H1 (cell line): ENCODE measurements at regions of chr11 and their contacts with region 1.

Region 1: GRCh38 chr11:76293189-76293631 is 86.9 kb upstream of the WNT11 start:
- DNase-seq: no peak
- H3K4me3 ChIP-seq: no peak overlapping the region
- H3K27ac ChIP-seq: no peak overlapping the region
- H3K4me1 ChIP-seq: no peaks in the 10 kb centered on the region
- H3K27me3 ChIP-seq: no peaks in the 10 kb centered on the region; a peak in 1 of 7 replicates
- CTCF ChIP-seq: no peak
- EP300 ChIP-seq: no peak
- POLR2A ChIP-seq: no peak
- RAD21 ChIP-seq: no peak

Region 2: DNA sequence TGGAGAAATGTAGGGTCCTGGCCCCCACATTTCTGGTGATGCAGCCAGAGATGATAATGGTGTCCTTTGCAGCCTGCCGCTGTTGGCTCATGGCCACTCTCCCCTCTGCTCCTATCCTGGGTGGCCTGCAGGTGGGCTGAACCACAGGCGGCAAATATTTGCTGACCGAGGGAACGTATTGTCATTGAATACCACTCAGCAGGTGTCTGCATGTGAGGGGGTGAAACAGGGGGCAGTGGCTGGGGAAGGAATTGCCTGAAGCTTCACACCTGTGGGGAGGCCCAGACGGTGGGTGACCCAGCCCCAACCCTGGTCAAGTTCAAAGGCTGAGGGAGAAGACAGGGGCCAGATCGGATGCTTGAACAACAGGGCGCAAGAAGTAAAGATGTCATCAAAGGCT is 13.6 kb before region 1 on chr11:
- CTCF ChIA-PET with region 1: interaction called, 10 read pairs
- POLR2A ChIA-PET with region 1: no interaction called
- DNase-seq: peak in 1 of 2 experiments; percentile 19
- H3K4me3 ChIP-seq: no peak overlapping the region
- H3K27ac ChIP-seq: no peak overlapping the region
- H3K4me1 ChIP-seq: peaks cover 5 to 33% (median 13%) of the 10 kb centered on the region in 4 experiments
- H3K27me3 ChIP-seq: peaks cover 0 to 7% (median 2%) of the 10 kb centered on the region in 4 experiments; a peak in 2 of 7 replicates
- CTCF ChIP-seq: no peak
- EP300 ChIP-seq: peak; percentile 17 to 27; a peak in 2 of 3 replicates
- POLR2A ChIP-seq: no peak
- RAD21 ChIP-seq: no peak

Region 3: DNA sequence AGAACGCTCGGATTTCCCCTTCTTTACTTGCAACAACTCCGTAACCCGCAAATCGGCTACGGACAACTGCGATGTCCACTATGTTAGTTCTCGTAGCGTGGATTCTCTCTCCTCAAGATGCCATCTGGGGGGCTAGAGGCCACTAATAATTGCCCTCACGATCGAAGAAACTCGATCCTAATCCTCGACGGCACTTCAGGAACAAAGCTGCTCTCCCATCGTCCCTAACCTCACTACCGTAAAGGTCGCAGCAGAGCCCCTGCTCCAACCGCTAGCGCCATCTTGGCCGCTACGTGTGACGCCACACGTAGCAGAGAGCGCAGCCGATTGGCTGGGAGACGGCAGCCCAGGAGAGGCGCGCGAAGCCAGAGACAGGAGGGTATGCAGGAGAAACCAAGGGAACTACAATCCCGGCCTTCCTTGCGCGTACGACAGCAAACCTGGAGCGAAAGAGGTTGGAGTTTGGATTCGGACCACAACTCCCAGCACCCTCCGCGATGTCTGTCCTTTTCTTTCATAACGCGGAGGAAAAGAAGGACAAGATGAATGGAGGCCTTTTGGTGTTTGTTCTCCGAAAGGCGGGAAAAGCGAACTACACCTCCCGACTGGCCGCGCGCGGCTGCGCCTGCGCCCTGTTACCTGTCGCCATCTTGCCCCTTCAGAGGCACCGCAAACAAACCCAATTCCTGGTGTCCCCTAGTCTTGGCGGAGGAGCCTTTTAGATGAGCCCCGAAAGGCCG is 151.3 kb after region 1 on chr11 and contains the start of gene EMSY:
- CTCF ChIA-PET with region 1: no interaction called
- POLR2A ChIA-PET with region 1: no interaction called
- DNase-seq: peak; percentile 89 to 98
- H3K4me3 ChIP-seq: peak within 1 kb of the TSS; percentile 77 to 99 (median 96)
- H3K27ac ChIP-seq: peak within 1 kb of the TSS; percentile 98
- H3K4me1 ChIP-seq: peaks cover 0 to 20% (median 1%) of the 10 kb centered on the region in 4 experiments; a peak in 5 of 7 replicates
- H3K27me3 ChIP-seq: no peaks in the 10 kb centered on the region
- CTCF ChIP-seq: no peak
- EP300 ChIP-seq: no peak
- POLR2A ChIP-seq: peak; percentile 98
- RAD21 ChIP-seq: no peak
- total RNA-seq, gene EMSY: 32.2 and 34.6 TPM in 2 replicates